MCF 10A (cell line): ENCODE measurements at regions of chr10 and their contacts with region 1.

Region 1: DNA sequence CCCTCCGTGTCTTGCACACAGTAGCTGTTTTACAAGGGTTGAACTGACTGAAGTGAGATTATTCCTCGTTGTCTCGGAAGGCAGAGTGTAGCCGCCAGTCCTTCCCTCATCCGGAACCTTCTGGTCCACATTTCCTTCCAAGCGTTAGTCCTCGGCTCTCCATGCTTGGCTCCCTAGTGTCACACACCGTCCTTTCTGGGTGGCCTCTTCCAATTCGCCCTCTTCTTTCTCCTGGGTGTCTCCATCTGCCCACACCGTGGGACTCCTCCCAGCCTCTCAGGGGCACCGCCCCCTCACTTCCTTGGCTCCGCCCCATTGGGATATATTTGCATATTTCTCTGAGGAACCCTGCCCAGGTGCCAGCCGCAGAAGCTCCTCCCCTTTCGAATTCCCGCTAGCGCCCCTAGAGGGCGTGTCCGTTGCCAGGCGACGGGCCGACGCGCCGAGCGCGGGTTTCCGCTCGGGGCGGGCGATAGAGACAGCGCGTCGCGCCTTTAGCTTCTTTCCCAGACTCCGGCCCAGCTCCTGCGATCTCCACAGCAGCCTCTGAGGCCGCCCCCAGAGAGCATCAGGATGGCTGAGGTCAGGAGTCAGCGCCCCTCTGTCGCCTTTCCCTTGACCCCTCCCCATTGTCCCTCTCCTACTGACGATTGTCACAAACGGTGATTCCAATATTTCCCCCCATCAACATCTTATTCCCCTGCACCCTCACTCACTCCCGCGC is at the start of gene CFAP58:
- DNase-seq: peak; percentile 95
- H3K4me3 Mint-ChIP-seq: no peak within 1 kb of the TSS
- H3K27ac Mint-ChIP-seq: no peak within 1 kb of the TSS
- H3K4me1 Mint-ChIP-seq: peaks cover 13% of the 10 kb centered on the region
- H3K27me3 Mint-ChIP-seq: no peaks in the 10 kb centered on the region
- CTCF ChIP-seq: peak; percentile 41
- total RNA-seq, gene CFAP58: 0.89 and 1.1 TPM in 2 replicates

Region 2: DNA sequence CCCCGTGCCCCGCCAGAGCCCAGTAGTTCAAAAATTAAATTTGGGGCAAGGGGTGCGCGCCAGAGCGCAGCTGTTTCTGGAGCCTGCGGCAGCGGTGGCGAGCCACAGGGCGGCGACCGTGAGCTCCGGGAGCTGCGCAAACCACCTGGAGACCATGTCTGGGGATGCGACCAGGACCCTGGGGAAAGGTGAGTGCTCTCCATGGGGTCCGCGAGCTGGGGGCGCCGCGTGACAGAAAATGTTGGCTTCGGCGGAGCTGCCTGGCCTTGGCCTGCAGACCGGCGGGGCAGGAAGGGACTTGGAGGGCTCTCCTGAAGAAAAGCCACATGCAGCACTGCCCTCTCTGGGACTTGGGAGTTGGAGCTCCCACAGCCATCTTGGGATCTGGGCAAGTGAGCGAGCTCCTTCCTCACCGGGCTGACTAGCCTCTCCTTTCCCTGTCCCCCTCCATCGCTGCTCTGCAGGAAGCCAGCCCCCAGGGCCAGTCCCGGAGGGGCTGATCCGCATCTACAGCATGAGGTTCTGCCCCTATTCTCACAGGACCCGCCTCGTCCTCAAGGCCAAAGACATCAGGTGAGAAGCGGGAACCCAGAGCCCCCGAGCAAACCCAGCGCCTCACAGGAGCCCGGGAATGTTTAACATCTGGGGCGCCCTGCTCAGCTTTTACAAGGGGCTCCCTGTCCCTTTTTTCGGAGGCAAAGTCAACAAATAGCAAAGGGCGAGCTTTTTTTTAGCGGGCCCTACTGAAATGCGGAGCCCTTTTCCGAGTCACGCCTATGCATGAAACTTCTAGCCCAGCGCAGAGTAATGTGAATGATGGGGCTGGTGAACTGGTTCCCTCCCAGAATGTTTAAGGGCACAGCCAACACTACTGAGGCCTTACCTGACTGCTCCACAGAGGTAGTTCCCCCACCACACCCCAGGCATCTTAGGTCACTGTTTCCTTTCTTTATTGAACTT is 78.4 kb before region 1 on chr10:
- CTCF ChIA-PET with region 1: interaction called, 156 read pairs
- POLR2A ChIA-PET with region 1: interaction called, 38 read pairs
- intact Hi-C with region 1: loop called (anchors 1 kb)
- DNase-seq: peak; percentile 73
- H3K4me3 Mint-ChIP-seq: peak overlapping the region; percentile 89
- H3K27ac Mint-ChIP-seq: peak overlapping the region; percentile 73
- H3K4me1 Mint-ChIP-seq: peaks cover 7% of the 10 kb centered on the region
- H3K27me3 Mint-ChIP-seq: no peaks in the 10 kb centered on the region
- CTCF ChIP-seq: peak; percentile 94

Region 3: GRCh38 chr10:104300736-104301292 is 52.7 kb before region 1 on chr10:
- CTCF ChIA-PET with region 1: interaction called, 406 read pairs
- POLR2A ChIA-PET with region 1: interaction called, 14 read pairs
- intact Hi-C with region 1: loop called (anchors 1 kb)
- DNase-seq: peak; percentile 90
- H3K4me3 Mint-ChIP-seq: no peak overlapping the region
- H3K27ac Mint-ChIP-seq: peak overlapping the region; percentile 93
- H3K4me1 Mint-ChIP-seq: peaks cover 34% of the 10 kb centered on the region
- H3K27me3 Mint-ChIP-seq: no peaks in the 10 kb centered on the region
- CTCF ChIP-seq: no peak

Region 4: DNA sequence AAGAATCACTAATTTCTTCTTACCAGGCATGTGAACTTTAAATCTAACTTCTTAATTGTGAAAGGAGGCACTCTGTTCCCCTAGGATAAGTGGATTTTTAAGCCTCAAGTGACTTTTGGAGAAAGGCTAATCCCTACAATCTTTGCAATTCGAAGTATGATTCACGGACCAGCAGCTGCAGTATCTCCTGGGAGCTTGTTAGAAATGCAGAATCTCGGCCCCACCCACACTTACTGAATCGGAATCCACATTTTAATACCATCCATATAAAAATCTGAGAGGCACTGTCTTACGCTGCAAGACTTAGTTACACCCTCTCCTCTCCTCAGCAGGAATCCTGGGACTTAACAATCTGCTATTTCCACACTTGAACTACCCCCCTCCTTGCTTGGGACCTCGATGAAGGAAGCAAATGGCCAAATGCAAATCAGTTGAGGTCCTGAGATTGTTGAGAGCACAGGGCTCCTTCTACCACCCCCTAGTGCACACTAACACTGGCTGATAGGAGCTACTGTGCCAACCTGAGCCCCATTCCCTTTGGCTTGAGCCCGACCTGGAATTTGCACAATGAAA is 36.2 kb before region 1 on chr10:
- CTCF ChIA-PET with region 1: interaction called, 34 read pairs
- POLR2A ChIA-PET with region 1: interaction called, 28 read pairs
- intact Hi-C with region 1: no loop called
- DNase-seq: no peak
- H3K4me3 Mint-ChIP-seq: peak overlapping the region; percentile 19
- H3K27ac Mint-ChIP-seq: peak overlapping the region; percentile 93
- H3K4me1 Mint-ChIP-seq: peaks cover 47% of the 10 kb centered on the region
- H3K27me3 Mint-ChIP-seq: no peaks in the 10 kb centered on the region
- CTCF ChIP-seq: no peak

Region 5: DNA sequence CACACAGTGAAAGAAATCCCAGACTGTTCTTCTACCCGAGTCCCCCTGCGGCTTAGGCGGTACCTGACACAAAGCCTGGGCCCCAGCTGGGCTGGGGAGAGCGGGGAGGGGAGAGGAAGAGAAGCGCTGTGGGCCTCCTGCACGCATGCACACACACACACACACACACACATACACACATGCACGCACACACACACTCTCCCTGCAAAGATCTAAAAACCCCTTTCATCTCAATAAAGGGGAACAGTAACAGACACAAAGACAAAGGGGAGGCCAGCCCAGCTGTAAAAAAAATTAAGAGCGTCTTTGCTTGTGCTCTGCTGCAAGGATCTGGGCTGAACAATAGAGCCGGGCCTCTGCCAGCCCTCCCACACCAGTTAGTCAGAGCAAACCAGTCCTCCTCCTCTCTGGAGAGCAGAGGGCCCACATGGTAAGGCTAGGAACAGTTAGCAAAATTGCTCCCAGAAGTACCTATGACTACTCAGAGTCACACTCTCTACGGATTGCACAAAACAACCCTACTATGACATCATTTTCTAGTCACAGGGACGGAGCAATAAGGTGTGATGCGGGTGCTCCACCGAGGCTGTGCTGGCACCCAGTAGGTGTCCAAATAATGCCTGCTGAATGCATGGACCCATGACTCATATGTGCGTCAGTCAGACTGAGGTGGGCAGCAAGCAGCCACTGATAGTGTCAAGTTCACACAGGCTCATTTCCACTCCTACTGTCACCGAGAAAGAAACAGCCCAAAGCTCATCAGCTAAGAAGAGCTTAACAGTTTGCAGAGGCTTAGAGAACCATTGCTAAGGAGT is 24.4 kb before region 1 on chr10:
- CTCF ChIA-PET with region 1: interaction called, 32 read pairs
- POLR2A ChIA-PET with region 1: interaction called, 22 read pairs
- intact Hi-C with region 1: no loop called
- DNase-seq: peak; percentile 97
- H3K4me3 Mint-ChIP-seq: peak overlapping the region; percentile 64
- H3K27ac Mint-ChIP-seq: peak overlapping the region; percentile 95
- H3K4me1 Mint-ChIP-seq: peaks cover 73% of the 10 kb centered on the region
- H3K27me3 Mint-ChIP-seq: no peaks in the 10 kb centered on the region
- CTCF ChIP-seq: no peak

Region 6: GRCh38 chr10:104406715-104407650 is 53.5 kb after region 1 on chr10:
- CTCF ChIA-PET with region 1: no interaction called
- POLR2A ChIA-PET with region 1: no interaction called
- intact Hi-C with region 1: no loop called
- DNase-seq: peak; percentile 55
- H3K4me3 Mint-ChIP-seq: no peak overlapping the region
- H3K27ac Mint-ChIP-seq: no peak overlapping the region
- H3K4me1 Mint-ChIP-seq: no peaks in the 10 kb centered on the region
- H3K27me3 Mint-ChIP-seq: no peaks in the 10 kb centered on the region
- CTCF ChIP-seq: peak; percentile 64

Region 7: GRCh38 chr10:104622598-104623209 is 269.2 kb after region 1 on chr10:
- CTCF ChIA-PET with region 1: interaction called, 3 read pairs
- POLR2A ChIA-PET with region 1: no interaction called
- intact Hi-C with region 1: loop called (anchors 5 kb)
- DNase-seq: peak; percentile 67
- H3K4me3 Mint-ChIP-seq: no peak overlapping the region
- H3K27ac Mint-ChIP-seq: no peak overlapping the region
- H3K4me1 Mint-ChIP-seq: no peaks in the 10 kb centered on the region
- H3K27me3 Mint-ChIP-seq: peaks cover 41% of the 10 kb centered on the region
- CTCF ChIP-seq: peak; percentile 87